ENCODE measurements at regions of chr18 and their contacts with region 1.

Region 1: DNA sequence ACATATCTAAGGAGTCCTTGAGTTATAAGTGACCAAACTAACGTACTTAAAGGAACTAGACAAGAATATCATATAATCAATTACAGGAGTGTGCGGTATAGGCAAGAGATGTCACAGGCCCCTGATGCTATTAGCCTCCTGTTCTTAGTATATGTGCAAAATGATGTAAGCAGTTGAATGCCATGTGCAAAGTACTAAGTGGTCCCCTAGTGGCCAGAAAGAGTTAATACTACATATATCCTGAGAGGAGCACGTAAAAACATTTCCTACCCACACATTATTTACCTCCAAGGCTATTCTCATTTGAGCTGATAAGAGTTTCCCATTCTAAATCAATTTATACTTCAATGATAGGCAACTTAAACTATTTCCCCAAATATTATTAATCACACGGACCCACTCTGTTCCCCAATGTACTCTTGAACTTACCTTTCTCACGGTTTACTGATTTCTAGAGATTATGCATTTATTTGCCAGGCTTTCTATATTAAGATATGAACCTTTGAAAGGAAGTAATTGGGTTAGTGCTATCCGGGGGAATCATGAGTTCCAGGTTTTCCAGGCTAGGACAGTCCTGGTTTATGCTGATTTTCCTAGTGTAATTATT is 158.0 kb upstream of the KLHL14 start:
- DNase-seq: peak; percentile 5
- H3K4me3 ChIP-seq: no peak overlapping the region
- CTCF ChIP-seq: peak; percentile 63

Region 2: GRCh38 chr18:32714571-32715148 is 216.1 kb before region 1 on chr18:
- CTCF ChIA-PET with region 1: interaction called, 11 read pairs
- POLR2A ChIA-PET with region 1: no interaction called
- DNase-seq: peak; percentile 16
- H3K4me3 ChIP-seq: no peak overlapping the region
- CTCF ChIP-seq: peak; percentile 76

Region 3: GRCh38 chr18:33010149-33010548 is 79.4 kb after region 1 on chr18:
- CTCF ChIA-PET with region 1: no interaction called
- POLR2A ChIA-PET with region 1: no interaction called
- DNase-seq: no peak
- H3K4me3 ChIP-seq: no peak overlapping the region
- CTCF ChIP-seq: no peak